ENCODE measurements at regions of chr4 and their contacts with region 1.

Region 1: GRCh38 chr4:39458505-39459300 is at the starts of genes LIAS and RPL9:
- DNase-seq: peak; percentile 94 to 98 (median 96)
- ATAC-seq: peak; percentile 95 to 97 (median 97)
- H3K4me3 ChIP-seq: peak within 1 kb of the TSS; percentile 67 to 93 (median 85)
- H3K27ac ChIP-seq: peak within 1 kb of the TSS; percentile 86 to 98 (median 92)
- H3K4me1 ChIP-seq: peaks cover 10 to 37% (median 27%) of the 10 kb centered on the region in 12 donors
- H3K27me3 ChIP-seq: no peaks in the 10 kb centered on the region
- CTCF ChIP-seq: no peak
- POLR2A ChIP-seq: peak; percentile 87 to 95
- total RNA-seq, gene LIAS: 15.9 to 34.4 (median 20.2) TPM
- total RNA-seq, gene RPL9: 576 to 1,701 (median 925) TPM

Region 2: DNA sequence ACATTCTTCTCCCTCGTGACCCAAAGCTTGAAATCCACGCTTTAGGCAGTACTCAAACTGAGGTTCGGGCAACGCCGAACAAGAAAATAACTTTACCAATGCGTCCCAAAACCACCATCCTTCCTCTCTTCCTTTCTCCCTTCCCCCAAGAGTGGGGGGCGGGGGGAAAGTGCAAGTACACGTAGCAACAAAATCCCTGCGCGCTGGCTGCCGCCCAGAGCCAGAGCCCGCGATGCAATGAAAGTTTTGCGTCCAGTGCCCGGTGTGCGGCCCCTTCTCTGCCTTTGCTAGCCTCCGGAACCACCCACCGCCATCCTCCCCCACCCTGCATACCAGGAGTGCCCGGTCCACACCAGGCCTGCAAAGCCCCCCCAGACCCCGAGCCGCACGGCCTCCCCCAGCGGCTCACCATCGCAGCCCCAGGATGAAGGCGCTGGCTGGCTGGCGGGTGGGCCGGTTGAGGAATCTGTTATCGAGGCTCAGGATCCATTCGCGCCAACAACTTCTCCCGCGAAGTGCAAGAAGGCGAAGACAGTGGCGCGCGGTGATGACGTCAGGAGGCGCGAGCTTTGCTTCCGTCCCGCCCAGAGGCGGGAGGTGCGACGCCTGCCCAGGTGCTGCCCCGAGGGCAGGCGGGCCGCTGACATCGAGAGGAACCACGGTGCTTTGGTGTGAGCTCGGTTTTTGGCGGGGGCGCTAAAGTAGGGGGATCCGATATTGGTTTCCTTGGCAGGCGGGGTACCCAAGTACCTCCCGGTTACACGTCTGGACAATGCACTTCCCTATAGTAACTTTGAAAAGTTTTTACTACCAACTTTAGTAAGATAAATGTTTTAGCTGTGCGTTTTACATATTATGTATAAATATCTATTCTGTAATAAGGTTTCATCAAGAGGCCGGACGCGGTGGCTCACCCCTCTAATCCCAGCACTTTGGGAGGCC is 92.6 kb before region 1 on chr4 and contains the start of gene RFC1:
- intact Hi-C with region 1: loop called in 1 of 10 experiments (anchors 10 kb)
- DNase-seq: peak; percentile 90 to 95 (median 93)
- ATAC-seq: peak; percentile 65 to 97 (median 96)
- H3K4me3 ChIP-seq: peak within 1 kb of the TSS; percentile 68 to 98 (median 86)
- H3K27ac ChIP-seq: peak within 1 kb of the TSS in 11 of 12 donors; percentile 32 to 89 (median 68)
- H3K4me1 ChIP-seq: peaks cover 0 to 28% (median 15%) of the 10 kb centered on the region in 12 donors
- H3K27me3 ChIP-seq: no peaks in the 10 kb centered on the region
- CTCF ChIP-seq: no peak
- POLR2A ChIP-seq: no peak
- total RNA-seq, gene RFC1: 21.0 to 31.2 (median 24.3) TPM

Region 3: DNA sequence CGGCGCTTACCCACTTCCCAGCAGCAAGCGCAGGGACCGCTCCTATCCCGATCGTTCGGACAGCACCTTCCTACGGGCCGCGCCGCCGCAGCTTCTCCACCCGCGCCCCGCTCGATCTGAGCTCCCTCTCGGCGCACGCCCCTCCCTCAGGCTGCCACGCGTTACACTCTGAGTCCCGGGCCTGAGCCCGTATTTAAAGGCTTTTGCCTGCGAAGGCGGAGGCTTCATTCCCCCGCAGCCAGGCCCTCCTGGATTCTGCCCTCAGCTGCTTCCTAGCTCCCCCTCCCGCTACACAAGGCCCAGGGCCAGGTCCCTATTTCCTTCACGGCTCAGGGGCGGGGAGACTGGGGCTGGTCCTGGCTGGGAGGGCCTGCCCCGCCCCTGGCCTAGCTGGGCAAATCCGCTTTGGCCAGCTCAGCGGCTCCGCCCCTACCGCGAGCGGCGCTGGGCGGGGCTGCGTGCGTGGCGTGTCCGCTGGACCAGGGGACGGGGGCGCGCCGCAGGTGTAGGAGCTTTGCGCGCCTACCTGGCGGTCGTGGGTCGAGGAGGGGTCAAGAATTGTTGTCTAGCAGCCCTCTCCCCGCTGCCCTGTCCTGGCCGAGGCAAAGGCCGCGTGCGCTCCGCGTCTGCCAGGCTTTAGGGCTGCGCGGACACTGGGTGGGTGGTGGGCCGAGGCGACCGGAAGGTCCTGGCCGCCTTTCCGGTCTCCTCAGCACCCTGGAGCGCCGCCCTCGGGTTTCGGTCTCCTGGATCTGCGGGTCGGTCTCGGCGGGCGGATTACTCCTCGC is 68.8 kb after region 1 on chr4 and contains the start of gene UGDH:
- intact Hi-C with region 1: loop called in 3 of 10 experiments (anchors 2 to 10 kb)
- DNase-seq: peak; percentile 96 to 99 (median 98)
- ATAC-seq: peak; percentile 98 to 99 (median 99)
- H3K4me3 ChIP-seq: peak within 1 kb of the TSS; percentile 54 to 97 (median 76)
- H3K27ac ChIP-seq: peak within 1 kb of the TSS; percentile 87 to 97 (median 95)
- H3K4me1 ChIP-seq: peaks cover 0 to 30% (median 17%) of the 10 kb centered on the region in 12 donors
- H3K27me3 ChIP-seq: no peaks in the 10 kb centered on the region
- CTCF ChIP-seq: peak in 4 of 12 donors; percentile 4 to 41 (median 28)
- POLR2A ChIP-seq: peak; percentile 62 to 94
- total RNA-seq, gene UGDH: 7.3 to 28.6 (median 16.5) TPM